CD4-positive, alpha-beta memory T cell (primary cell): ENCODE measurements at regions of chr1 and their contacts with region 1.

Region 1: DNA sequence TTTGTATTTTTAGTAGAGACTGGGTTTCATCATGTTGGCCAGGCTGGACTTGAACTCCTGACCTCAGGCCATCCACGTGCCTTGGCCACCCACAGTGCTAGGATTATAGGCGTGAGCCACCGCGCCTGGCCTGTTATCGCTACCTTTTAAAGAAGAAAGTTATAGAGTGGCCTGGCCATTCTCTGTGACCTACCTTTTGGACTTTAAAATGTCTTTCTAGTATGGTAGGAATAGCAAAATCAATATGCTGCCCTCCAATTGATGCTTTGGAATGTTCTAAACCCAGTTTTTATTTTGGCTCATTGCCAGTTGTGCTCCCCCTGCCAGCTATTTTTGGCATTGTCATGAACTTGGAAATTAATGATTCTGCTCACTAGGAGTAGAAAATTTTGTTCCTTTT is 19.9 kb downstream of the HIPK1 start:
- DNase-seq: peak in 2 of 5 donors; percentile 27 to 41
- H3K4me3 ChIP-seq: no peak overlapping the region
- H3K4me3 Mint-ChIP-seq: peak overlapping the region in 4 of 8 donors; percentile 51 to 86 (median 72)
- H3K27ac ChIP-seq: peak overlapping the region; percentile 5
- H3K27ac Mint-ChIP-seq: peak overlapping the region; percentile 69 to 95 (median 91)
- H3K4me1 ChIP-seq: peaks cover 88% of the 10 kb centered on the region
- H3K4me1 Mint-ChIP-seq: peaks cover 47 to 93% (median 65%) of the 10 kb centered on the region in 4 donors
- H3K27me3 ChIP-seq: no peaks in the 10 kb centered on the region
- H3K27me3 Mint-ChIP-seq: no peaks in the 10 kb centered on the region

Region 2: GRCh38 chr1:113963281-113963906 is 14.4 kb after region 1 on chr1:
- CTCF ChIA-PET with region 1: interaction called, 11 read pairs
- POLR2A ChIA-PET with region 1: interaction called, 3 read pairs
- intact Hi-C with region 1: no loop called
- DNase-seq: peak in 1 of 5 donors; percentile 13
- H3K4me3 ChIP-seq: no peak overlapping the region
- H3K4me3 Mint-ChIP-seq: no peak overlapping the region
- H3K27ac ChIP-seq: no peak overlapping the region
- H3K27ac Mint-ChIP-seq: peak overlapping the region in 5 of 7 donors; percentile 57 to 91 (median 71)
- H3K4me1 ChIP-seq: no peaks in the 10 kb centered on the region
- H3K4me1 Mint-ChIP-seq: peaks cover 7 to 17% (median 13%) of the 10 kb centered on the region in 4 donors
- H3K27me3 ChIP-seq: no peaks in the 10 kb centered on the region
- H3K27me3 Mint-ChIP-seq: no peaks in the 10 kb centered on the region

Region 3: DNA sequence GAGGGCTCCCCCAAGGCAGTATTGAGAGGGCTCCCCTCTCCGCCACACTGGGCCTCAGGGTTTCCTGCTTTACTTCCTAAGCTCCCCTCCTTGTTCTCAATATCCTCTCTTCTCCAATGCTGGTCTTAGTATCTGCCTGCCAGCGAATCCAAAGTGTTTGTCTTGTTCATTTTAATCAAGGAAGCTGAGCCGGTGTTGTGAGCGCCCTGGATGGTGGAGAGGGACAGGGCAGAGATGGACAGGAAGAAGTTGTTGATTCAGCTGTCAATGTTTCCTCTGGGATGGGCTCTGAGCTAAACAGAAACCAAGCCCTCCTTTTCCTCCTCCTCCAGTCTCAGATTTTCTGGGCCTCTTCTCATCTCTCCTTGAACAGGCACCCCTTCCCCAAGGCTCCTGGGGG is 35.7 kb after region 1 on chr1:
- CTCF ChIA-PET with region 1: no interaction called
- POLR2A ChIA-PET with region 1: no interaction called
- intact Hi-C with region 1: no loop called
- DNase-seq: no peak
- H3K4me3 ChIP-seq: no peak overlapping the region
- H3K4me3 Mint-ChIP-seq: no peak overlapping the region
- H3K27ac ChIP-seq: no peak overlapping the region
- H3K27ac Mint-ChIP-seq: peak overlapping the region in 1 of 7 donors; percentile 39
- H3K4me1 ChIP-seq: no peaks in the 10 kb centered on the region
- H3K4me1 Mint-ChIP-seq: peaks cover 0 to 3% (median 1%) of the 10 kb centered on the region in 4 donors
- H3K27me3 ChIP-seq: no peaks in the 10 kb centered on the region
- H3K27me3 Mint-ChIP-seq: peaks cover 2% of the 10 kb centered on the region in 2 donors

Region 4: GRCh38 chr1:114072246-114072645 is 123.2 kb after region 1 on chr1:
- CTCF ChIA-PET with region 1: no interaction called
- POLR2A ChIA-PET with region 1: no interaction called
- intact Hi-C with region 1: no loop called
- DNase-seq: no peak
- H3K4me3 ChIP-seq: no peak overlapping the region
- H3K4me3 Mint-ChIP-seq: no peak overlapping the region
- H3K27ac ChIP-seq: no peak overlapping the region
- H3K27ac Mint-ChIP-seq: no peak overlapping the region
- H3K4me1 ChIP-seq: peaks cover 4% of the 10 kb centered on the region
- H3K4me1 Mint-ChIP-seq: peaks cover 0 to 7% (median 1%) of the 10 kb centered on the region in 4 donors
- H3K27me3 ChIP-seq: no peaks in the 10 kb centered on the region
- H3K27me3 Mint-ChIP-seq: peaks cover 4 to 9% of the 10 kb centered on the region in 2 donors